ENCODE measurements at regions of chr14 and their contacts with region 1.

Region 1: DNA sequence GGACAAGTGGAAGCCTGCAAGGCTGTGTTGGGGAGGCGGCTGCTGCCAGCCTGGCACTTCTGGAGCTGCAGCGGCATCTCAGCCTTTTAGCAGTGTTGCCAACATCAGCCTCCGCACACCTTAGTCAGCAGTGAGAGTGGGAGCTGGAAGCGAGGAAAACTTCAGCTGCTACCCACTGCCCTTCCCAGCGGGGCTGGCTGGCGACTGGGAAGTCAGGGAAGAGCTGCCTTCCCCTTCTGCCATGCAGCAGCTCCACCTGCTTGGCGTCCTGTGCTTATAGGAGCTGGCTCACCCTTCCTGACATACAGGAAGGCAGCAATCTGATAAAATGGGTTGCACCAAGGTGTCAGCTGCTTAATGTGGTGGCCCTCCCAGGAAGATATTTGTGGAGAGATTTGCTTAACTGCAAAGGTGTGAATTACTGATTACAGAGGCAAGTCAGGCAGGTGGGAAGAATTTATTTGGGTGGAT is 15.4 kb upstream of the PLEKHG3 start:
- DNase-seq: peak in 1 of 5 donors; percentile 48
- H3K4me3 ChIP-seq: no peak overlapping the region
- H3K4me3 Mint-ChIP-seq: peak overlapping the region in 7 of 8 donors; percentile 52 to 77 (median 71)
- H3K27ac ChIP-seq: no peak overlapping the region
- H3K27ac Mint-ChIP-seq: peak overlapping the region in 6 of 7 donors; percentile 49 to 87 (median 70)
- H3K4me1 ChIP-seq: peaks cover 29% of the 10 kb centered on the region
- H3K4me1 Mint-ChIP-seq: peaks cover 31 to 64% (median 44%) of the 10 kb centered on the region in 4 donors
- H3K27me3 ChIP-seq: no peaks in the 10 kb centered on the region
- H3K27me3 Mint-ChIP-seq: no peaks in the 10 kb centered on the region

Region 2: DNA sequence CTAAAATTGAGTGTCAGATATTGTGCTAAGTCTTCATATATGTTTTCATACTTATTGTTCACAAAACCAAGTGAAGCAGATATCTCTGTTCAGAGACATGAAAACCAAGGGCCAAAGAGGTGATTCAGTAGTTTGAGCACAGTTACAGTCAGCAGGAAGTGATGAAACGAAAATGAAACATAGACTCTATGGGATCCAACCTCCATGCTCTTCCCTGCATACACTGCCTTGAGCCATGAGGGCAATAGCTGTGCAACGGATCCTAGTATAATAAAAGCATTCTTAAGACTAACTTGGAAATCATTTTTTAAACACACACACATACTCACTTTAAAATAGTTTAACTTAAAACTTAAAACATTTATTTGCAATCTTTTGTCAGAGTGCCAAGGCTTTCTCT is 422.6 kb before region 1 on chr14:
- CTCF ChIA-PET with region 1: no interaction called
- POLR2A ChIA-PET with region 1: no interaction called
- intact Hi-C with region 1: no loop called
- DNase-seq: no peak
- H3K4me3 ChIP-seq: no peak overlapping the region
- H3K4me3 Mint-ChIP-seq: peak overlapping the region in 5 of 8 donors; percentile 2 to 64 (median 16)
- H3K27ac ChIP-seq: no peak overlapping the region
- H3K27ac Mint-ChIP-seq: peak overlapping the region in 2 of 7 donors; percentile 13 to 28
- H3K4me1 ChIP-seq: peaks cover 10% of the 10 kb centered on the region
- H3K4me1 Mint-ChIP-seq: peaks cover 14 to 28% (median 15%) of the 10 kb centered on the region in 4 donors
- H3K27me3 ChIP-seq: no peaks in the 10 kb centered on the region
- H3K27me3 Mint-ChIP-seq: no peaks in the 10 kb centered on the region

Region 3: DNA sequence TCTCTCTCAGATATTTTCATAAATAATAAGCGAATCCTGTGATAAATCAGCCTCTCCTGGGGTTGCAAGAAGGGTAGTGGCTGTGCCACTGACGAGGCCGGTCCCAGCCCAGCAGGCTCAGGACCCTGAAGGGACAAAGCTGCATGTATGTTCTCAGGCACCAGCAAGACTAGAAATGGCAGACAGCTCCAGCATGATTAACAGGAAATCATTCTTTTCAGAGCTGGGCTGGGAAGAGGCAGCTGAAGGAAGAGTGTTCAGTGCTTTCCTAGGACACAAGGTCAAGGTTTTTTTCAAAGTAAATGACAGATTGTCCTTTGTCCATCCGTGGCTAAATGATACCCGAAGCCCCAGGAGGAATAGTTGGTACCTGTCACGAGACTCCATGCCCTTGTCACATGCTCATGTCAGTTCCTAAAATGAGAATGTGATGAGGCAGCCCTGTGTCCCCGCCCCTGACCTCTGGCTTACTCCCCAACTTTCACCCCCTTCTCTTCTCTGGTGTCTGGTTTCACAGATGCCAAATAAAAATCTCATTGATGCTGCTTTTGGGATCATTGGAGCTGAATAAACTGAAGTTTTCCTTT is 73.9 kb before region 1 on chr14:
- CTCF ChIA-PET with region 1: no interaction called
- POLR2A ChIA-PET with region 1: no interaction called
- intact Hi-C with region 1: no loop called
- DNase-seq: no peak
- H3K4me3 ChIP-seq: no peak overlapping the region
- H3K4me3 Mint-ChIP-seq: no peak overlapping the region
- H3K27ac ChIP-seq: no peak overlapping the region
- H3K27ac Mint-ChIP-seq: no peak overlapping the region
- H3K4me1 ChIP-seq: no peaks in the 10 kb centered on the region
- H3K4me1 Mint-ChIP-seq: no peaks in the 10 kb centered on the region
- H3K27me3 ChIP-seq: no peaks in the 10 kb centered on the region
- H3K27me3 Mint-ChIP-seq: peaks cover 1 to 3% of the 10 kb centered on the region in 2 donors

Region 4: DNA sequence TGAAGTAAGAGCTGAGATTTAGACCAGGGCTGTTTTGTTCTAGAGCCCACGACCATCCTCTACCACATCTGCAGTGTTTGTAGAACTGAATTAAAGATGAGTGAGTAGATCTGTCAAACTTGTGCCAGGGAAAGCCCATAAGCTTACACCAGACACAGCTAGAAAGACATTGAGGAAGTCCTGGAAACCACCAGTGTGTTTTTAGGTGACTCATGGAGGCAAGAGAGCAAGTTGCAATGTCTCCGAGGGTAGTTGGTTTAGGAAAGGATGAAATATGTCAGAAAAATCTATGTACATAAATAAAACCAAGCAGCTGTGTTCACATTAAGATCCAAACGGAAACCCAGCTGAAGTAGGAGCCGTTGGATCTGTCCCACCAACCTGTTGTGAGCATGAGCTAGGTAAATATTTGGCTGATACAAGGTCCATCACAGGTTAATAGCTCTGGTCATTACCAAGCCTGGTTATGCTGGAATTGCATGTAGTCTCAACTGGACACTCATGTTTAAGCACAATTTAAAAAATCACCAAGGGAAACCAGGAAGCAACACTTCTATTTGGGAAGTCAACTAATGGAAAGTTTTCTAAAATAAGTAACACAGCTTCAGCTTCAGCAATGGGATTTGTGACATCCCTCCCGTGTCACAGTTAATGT is 34.5 kb before region 1 on chr14:
- CTCF ChIA-PET with region 1: no interaction called
- POLR2A ChIA-PET with region 1: no interaction called
- intact Hi-C with region 1: no loop called
- DNase-seq: no peak
- H3K4me3 ChIP-seq: no peak overlapping the region
- H3K4me3 Mint-ChIP-seq: no peak overlapping the region
- H3K27ac ChIP-seq: no peak overlapping the region
- H3K27ac Mint-ChIP-seq: no peak overlapping the region
- H3K4me1 ChIP-seq: no peaks in the 10 kb centered on the region
- H3K4me1 Mint-ChIP-seq: peaks cover 6 to 14% (median 9%) of the 10 kb centered on the region in 4 donors
- H3K27me3 ChIP-seq: no peaks in the 10 kb centered on the region
- H3K27me3 Mint-ChIP-seq: peaks cover 4 to 12% of the 10 kb centered on the region in 2 donors

Region 5: DNA sequence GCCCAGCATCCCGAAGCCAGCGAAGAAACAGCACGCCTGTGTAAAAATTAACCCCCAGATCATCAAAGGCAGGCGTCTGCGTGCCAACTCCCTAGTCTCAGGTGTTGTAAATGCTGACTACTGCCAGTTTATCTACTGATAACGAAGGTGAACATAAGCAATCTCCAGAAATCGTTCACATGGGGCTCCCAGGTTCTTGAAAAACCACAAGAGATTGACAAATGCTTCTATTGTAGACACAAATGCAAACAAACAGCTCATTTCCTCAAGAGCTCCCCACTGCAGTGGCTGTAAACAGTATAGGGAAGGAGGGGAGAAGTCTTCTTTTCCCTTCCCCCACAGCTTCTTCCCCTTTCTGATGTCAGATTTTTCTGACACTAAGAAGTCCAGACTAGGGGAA is 10.1 kb after region 1 on chr14:
- CTCF ChIA-PET with region 1: interaction called, 9 read pairs
- POLR2A ChIA-PET with region 1: interaction called, 178 read pairs
- intact Hi-C with region 1: loop called (anchors 2 kb)
- DNase-seq: peak in 4 of 5 donors; percentile 37 to 59 (median 50)
- H3K4me3 ChIP-seq: no peak overlapping the region
- H3K4me3 Mint-ChIP-seq: peak overlapping the region; percentile 11 to 80 (median 60)
- H3K27ac ChIP-seq: peak overlapping the region; percentile 7
- H3K27ac Mint-ChIP-seq: peak overlapping the region; percentile 48 to 95 (median 86)
- H3K4me1 ChIP-seq: peaks cover 89% of the 10 kb centered on the region
- H3K4me1 Mint-ChIP-seq: peaks cover 53 to 88% (median 64%) of the 10 kb centered on the region in 4 donors
- H3K27me3 ChIP-seq: no peaks in the 10 kb centered on the region
- H3K27me3 Mint-ChIP-seq: no peaks in the 10 kb centered on the region

Measured in CD4-positive, alpha-beta memory T cell (primary cell).